GM10248 (cell line): ENCODE measurements at regions of chr11 and their contacts with region 1.

Region 1: GRCh38 chr11:111932611-111932950 is 4.6 kb upstream of the DIXDC1 start:
- DNase-seq: no peak
- CTCF ChIP-seq: no peak

Region 2: GRCh38 chr11:111454561-111455192 is 477.9 kb before region 1 on chr11:
- CTCF ChIA-PET with region 1: no interaction called
- POLR2A ChIA-PET with region 1: no interaction called
- DNase-seq: peak; percentile 64
- CTCF ChIP-seq: peak; percentile 11

Region 3: GRCh38 chr11:111911563-111912401 is 20.8 kb before region 1 on chr11 and contains the start of gene CRYAB:
- CTCF ChIA-PET with region 1: interaction called, 14 read pairs
- POLR2A ChIA-PET with region 1: no interaction called
- DNase-seq: no peak
- CTCF ChIP-seq: no peak